Right ventricle myocardium superior (tissue), 1 donor: ENCODE measurements at regions of chr10 and their contacts with region 1.

Region 1: GRCh38 chr10:28532383-28533175 is at the start of gene WAC:
- DNase-seq: peak; percentile 97
- ATAC-seq: peak; percentile 97
- total RNA-seq, gene WAC: 92.9 TPM

Region 2: GRCh38 chr10:28432210-28432676 is 100.3 kb before region 1 on chr10:
- intact Hi-C with region 1: loop called (anchors 10 kb)
- DNase-seq: peak; percentile 70
- ATAC-seq: peak; percentile 95

Region 3: GRCh38 chr10:28592930-28593329 is 60.4 kb after region 1 on chr10:
- intact Hi-C with region 1: loop called (anchors 10 kb)
- DNase-seq: no peak
- ATAC-seq: no peak